ENCODE measurements at regions of chr14 and their contacts with region 1.

Region 1: GRCh38 chr14:93137864-93138263 is 22.1 kb upstream of the ITPK1 start:
- DNase-seq: peak in 1 of 2 donors; percentile 78
- ATAC-seq: no peak
- H3K4me3 ChIP-seq: no peak overlapping the region
- H3K27ac ChIP-seq: no peak overlapping the region
- H3K4me1 ChIP-seq: no peaks in the 10 kb centered on the region
- H3K27me3 ChIP-seq: no peaks in the 10 kb centered on the region

Region 2: DNA sequence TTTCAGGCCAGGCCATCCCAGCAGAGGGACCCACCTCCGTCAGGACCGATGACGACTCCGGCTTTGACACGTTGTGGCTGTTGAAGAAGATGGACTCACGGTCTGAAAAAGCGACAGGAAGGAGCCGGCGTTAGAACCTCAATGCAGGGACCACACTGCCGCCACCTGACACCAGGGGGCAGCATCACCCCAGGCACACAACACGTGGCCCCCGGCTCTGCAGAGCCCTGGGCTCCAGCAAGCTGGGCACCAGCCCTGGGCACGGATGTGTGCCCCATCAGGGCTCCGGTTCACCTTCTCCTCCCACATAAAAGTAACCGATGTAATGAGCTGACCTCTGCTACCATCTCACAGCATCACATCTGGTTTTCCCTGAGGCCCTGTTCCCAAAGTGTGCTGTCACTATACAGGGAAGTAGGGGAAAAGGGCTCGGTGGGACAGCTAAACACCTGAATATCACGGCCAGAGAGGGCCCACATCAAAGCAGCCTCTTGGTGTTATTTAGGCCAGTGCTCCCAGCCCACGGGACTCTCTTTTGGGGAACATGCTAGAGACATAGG is 185.9 kb before region 1 on chr14:
- intact Hi-C with region 1: loop called (anchors 1 to 2 kb)
- DNase-seq: peak; percentile 86 to 93
- ATAC-seq: peak; percentile 91
- H3K4me3 ChIP-seq: no peak overlapping the region
- H3K27ac ChIP-seq: peak overlapping the region in 1 of 2 donors; percentile 21
- H3K4me1 ChIP-seq: no peaks in the 10 kb centered on the region
- H3K27me3 ChIP-seq: no peaks in the 10 kb centered on the region

Region 3: GRCh38 chr14:92973261-92973797 is 164.5 kb before region 1 on chr14:
- intact Hi-C with region 1: loop called (anchors 5 kb)
- DNase-seq: peak; percentile 63 to 91
- ATAC-seq: peak; percentile 79
- H3K4me3 ChIP-seq: no peak overlapping the region
- H3K27ac ChIP-seq: no peak overlapping the region
- H3K4me1 ChIP-seq: no peaks in the 10 kb centered on the region
- H3K27me3 ChIP-seq: no peaks in the 10 kb centered on the region

Region 4: GRCh38 chr14:93112891-93113677 is 24.8 kb before region 1 on chr14:
- intact Hi-C with region 1: loop called in 1 of 2 experiments (anchors 2 kb)
- DNase-seq: peak; percentile 84 to 89
- ATAC-seq: peak; percentile 30
- H3K4me3 ChIP-seq: peak overlapping the region in 1 of 2 donors; percentile 2
- H3K27ac ChIP-seq: peak overlapping the region in 1 of 2 donors; percentile 11
- H3K4me1 ChIP-seq: no peaks in the 10 kb centered on the region
- H3K27me3 ChIP-seq: no peaks in the 10 kb centered on the region

Region 5: DNA sequence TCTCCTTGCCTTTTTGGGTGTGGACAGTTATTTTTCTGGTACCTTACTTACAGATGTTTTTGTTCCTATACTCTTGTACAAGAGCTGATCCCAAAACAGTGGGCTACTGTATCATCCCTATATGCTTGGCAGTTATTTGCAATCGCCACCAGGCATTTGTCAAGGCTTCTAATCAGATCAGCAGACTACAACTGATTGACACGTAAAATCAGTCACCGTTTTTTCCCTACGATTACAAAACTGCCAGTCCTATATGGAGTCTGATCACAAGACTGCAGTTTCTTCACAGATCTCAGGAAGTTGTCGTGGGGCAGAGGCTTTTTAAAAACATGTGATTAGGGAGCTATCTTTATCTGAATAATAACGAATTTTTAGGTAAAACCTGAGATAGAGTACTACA is 48.6 kb after region 1 on chr14:
- intact Hi-C with region 1: no loop called
- DNase-seq: no peak
- ATAC-seq: no peak
- H3K4me3 ChIP-seq: no peak overlapping the region
- H3K27ac ChIP-seq: no peak overlapping the region
- H3K4me1 ChIP-seq: peaks cover 0 to 2% of the 10 kb centered on the region in 2 donors
- H3K27me3 ChIP-seq: no peaks in the 10 kb centered on the region

Region 6: GRCh38 chr14:93456356-93456755 is 318.5 kb after region 1 on chr14:
- intact Hi-C with region 1: no loop called
- DNase-seq: no peak
- ATAC-seq: no peak
- H3K4me3 ChIP-seq: no peak overlapping the region
- H3K27ac ChIP-seq: no peak overlapping the region
- H3K4me1 ChIP-seq: no peaks in the 10 kb centered on the region
- H3K27me3 ChIP-seq: no peaks in the 10 kb centered on the region